ENCODE measurements at regions of chr3 and their contacts with region 1.

Region 1: DNA sequence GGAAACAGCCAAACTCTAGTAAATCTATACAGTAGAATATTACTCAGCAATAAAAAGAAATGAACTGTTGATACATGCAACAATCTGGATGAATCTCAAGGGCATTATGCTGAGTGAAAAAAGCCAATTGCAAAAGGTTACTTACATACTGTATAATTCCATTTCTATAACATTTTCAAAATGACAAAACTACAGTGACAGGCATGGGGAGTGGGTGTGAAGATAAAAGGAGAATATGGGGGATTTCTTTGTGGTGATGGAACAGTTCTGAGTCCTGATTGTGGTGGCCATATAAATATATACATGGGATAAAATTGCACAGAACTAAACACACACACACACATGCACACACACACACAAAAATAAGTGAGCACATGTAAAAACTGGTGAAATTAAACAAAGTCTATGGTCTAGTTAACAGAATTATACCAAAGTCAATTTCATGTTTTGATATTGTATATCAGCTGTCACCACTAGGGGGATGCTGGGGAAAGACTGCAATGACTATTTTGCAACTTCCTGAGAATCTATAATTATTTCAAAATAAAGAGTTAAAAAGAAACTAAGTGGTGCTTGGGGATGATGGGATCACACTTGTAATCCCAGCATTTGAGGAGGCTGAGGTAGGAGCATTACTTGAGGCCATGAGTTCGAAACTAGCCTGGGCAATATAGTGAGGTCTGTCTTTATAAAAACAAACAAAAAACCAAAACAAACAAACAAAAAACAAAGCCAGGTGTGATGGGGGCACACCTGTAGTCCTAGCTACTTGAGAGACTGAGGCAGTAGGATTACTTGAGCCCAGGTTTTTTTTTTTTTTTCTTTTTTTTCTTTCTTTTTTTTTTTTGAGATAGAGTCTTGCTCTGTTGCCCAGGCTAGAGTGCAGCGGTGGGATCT is 66.0 kb downstream of the SPTSSB start:
- DNase-seq: peak in 4 of 5 donors; percentile 11 to 26 (median 17)
- H3K4me3 ChIP-seq: no peak overlapping the region
- H3K4me3 Mint-ChIP-seq: peak overlapping the region in 2 of 8 donors; percentile 18 to 31
- H3K27ac ChIP-seq: no peak overlapping the region
- H3K27ac Mint-ChIP-seq: no peak overlapping the region
- H3K4me1 ChIP-seq: peaks cover 24% of the 10 kb centered on the region
- H3K4me1 Mint-ChIP-seq: peaks cover 22 to 42% (median 28%) of the 10 kb centered on the region in 4 donors
- H3K27me3 ChIP-seq: no peaks in the 10 kb centered on the region
- H3K27me3 Mint-ChIP-seq: no peaks in the 10 kb centered on the region

Region 2: GRCh38 chr3:161371430-161372326 is 66.3 kb after region 1 on chr3 and contains the start of gene SPTSSB:
- CTCF ChIA-PET with region 1: interaction called, 7 read pairs
- POLR2A ChIA-PET with region 1: no interaction called
- intact Hi-C with region 1: loop called (anchors 2 kb)
- DNase-seq: peak; percentile 41 to 57 (median 45)
- H3K4me3 ChIP-seq: peak within 1 kb of the TSS; percentile 46 to 69
- H3K4me3 Mint-ChIP-seq: peak within 1 kb of the TSS; percentile 83 to 95 (median 88)
- H3K27ac ChIP-seq: no peak within 1 kb of the TSS
- H3K27ac Mint-ChIP-seq: peak within 1 kb of the TSS in 4 of 7 donors; percentile 4 to 91 (median 72)
- H3K4me1 ChIP-seq: peaks cover 17% of the 10 kb centered on the region
- H3K4me1 Mint-ChIP-seq: peaks cover 4 to 25% (median 12%) of the 10 kb centered on the region in 4 donors
- H3K27me3 ChIP-seq: peaks cover 5% of the 10 kb centered on the region
- H3K27me3 Mint-ChIP-seq: peaks cover 4 to 17% of the 10 kb centered on the region in 2 donors
- total RNA-seq, gene SPTSSB: not detected

Measured in CD4-positive, alpha-beta memory T cell (primary cell).